ENCODE measurements at regions of chr4 and their contacts with region 1.

Region 1: DNA sequence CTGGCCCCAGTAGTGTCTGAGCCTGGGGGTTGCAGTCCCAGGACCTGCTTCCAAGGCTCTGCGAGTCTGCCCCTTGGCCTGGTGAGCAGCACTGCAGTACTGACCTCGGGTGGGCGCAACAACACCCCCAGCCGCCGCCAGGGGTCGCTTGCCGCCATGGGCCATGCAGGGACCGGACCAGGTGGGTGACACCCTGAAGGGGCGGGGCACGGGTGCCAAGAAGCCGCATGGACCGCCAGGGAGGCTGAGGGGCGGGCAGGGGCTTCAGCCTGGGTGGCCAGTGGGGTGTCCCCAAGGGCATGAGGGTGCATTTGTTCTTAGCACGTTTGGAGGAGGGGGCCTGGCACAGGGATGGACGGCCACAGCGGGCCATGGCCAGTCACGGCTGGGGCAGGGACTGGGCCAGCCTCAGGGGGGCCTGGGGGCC is 25.0 kb downstream of the TACC3 start:
- DNase-seq: peak; percentile 55 to 87 (median 71)
- ATAC-seq: peak; percentile 35 to 79 (median 70)
- H3K4me3 ChIP-seq: no peak overlapping the region
- H3K27ac ChIP-seq: no peak overlapping the region
- H3K4me1 ChIP-seq: peaks cover 0 to 11% (median 2%) of the 10 kb centered on the region in 12 donors
- H3K27me3 ChIP-seq: peaks cover 0 to 7% (median 0%) of the 10 kb centered on the region in 9 donors
- CTCF ChIP-seq: peak; percentile 68 to 88 (median 78)
- POLR2A ChIP-seq: no peak

Region 2: DNA sequence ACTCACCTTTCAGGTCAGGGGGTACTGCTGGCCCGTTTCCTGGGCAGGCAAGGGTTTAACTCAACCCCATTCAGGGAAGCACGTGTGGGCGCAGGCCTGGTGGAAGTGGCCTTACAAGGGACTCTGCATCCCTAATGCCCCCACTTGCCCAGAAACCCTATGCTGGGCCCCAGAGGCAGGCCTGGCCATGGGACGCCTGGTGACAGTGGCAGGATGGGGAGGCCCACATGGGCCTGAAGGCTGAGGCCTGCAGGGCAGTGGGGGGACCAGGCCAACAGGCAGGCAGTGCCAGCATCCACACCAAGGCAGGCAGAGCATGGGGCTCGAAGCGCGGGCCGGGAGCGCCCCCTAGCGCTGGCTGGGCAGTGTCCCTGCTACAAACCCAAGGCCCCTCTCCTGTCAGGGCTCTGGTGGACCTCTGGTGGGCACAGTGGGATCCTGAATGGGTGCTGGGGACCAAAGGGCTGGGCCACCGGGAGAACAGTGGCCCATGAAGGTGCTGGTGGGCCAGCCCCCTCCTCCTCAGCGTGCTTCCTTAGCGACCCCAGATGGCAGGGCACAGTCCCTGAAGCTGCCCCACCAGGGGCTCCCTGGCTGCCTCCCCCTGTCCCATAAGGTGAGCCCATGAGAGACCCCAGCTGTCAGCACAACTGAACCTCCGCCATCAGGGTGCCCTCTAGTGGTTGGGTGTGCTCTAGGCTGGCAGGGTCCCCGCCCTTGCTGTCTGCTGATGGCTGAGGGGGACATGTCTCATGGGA is 63.7 kb after region 1 on chr4:
- intact Hi-C with region 1: loop called (anchors 1 to 5 kb)
- DNase-seq: peak; percentile 54 to 83 (median 66)
- ATAC-seq: peak; percentile 53 to 85 (median 68)
- H3K4me3 ChIP-seq: no peak overlapping the region
- H3K27ac ChIP-seq: no peak overlapping the region
- H3K4me1 ChIP-seq: peaks cover 0 to 2% (median 0%) of the 10 kb centered on the region in 12 donors
- H3K27me3 ChIP-seq: no peaks in the 10 kb centered on the region
- CTCF ChIP-seq: peak; percentile 63 to 88 (median 80)
- POLR2A ChIP-seq: no peak

Region 3: DNA sequence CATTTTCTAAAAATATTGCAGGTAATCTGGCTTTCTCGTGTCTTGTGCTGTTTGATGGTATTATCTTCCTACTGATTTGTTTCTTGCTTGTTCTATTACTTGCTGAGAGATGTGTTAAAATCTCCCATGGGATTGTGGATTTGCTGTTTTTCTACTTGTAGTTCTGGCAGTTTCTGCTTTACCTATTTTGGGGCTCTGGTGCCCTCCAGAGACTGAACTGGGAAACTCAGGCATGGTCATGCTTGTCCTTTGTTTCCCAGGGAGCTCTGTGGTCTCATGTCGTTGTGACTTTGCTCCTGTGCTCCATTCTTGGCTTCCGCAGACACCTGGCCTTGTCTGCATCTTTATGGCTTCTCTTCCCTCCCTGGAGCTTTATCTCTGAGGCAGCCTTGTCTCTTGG is 164.4 kb after region 1 on chr4:
- intact Hi-C with region 1: loop called in 1 of 10 experiments (anchors 1 kb)
- DNase-seq: no peak
- ATAC-seq: peak in 1 of 4 donors; percentile 42
- H3K4me3 ChIP-seq: no peak overlapping the region
- H3K27ac ChIP-seq: no peak overlapping the region
- H3K4me1 ChIP-seq: no peaks in the 10 kb centered on the region
- H3K27me3 ChIP-seq: no peaks in the 10 kb centered on the region
- CTCF ChIP-seq: peak in 11 of 12 donors; percentile 15 to 55 (median 32)
- POLR2A ChIP-seq: no peak